SK-N-SH (cell line): ENCODE measurements at regions of chr15 and their contacts with region 1.

Region 1: GRCh38 chr15:43440721-43441281 is 52.2 kb downstream of the TP53BP1 start:
- DNase-seq: peak; percentile 43
- H3K4me3 ChIP-seq: no peak overlapping the region; a peak in 1 of 4 replicates
- H3K27ac ChIP-seq: peak overlapping the region; percentile 36 to 92; a peak in 3 of 4 replicates
- H3K4me1 ChIP-seq: no peaks in the 10 kb centered on the region
- H3K27me3 ChIP-seq: no peaks in the 10 kb centered on the region
- CTCF ChIP-seq: peak; percentile 71
- EP300 ChIP-seq: peak in 1 of 2 experiments; percentile 63; a peak in 1 of 4 replicates
- RAD21 ChIP-seq: peak; percentile 66

Region 2: GRCh38 chr15:43517354-43518196 is 76.8 kb after region 1 on chr15 and contains the start of gene MAP1A:
- CTCF ChIA-PET with region 1: interaction called, 36 read pairs
- POLR2A ChIA-PET with region 1: no interaction called
- DNase-seq: peak; percentile 89
- H3K4me3 ChIP-seq: peak within 1 kb of the TSS; percentile 73 to 85
- H3K27ac ChIP-seq: peak within 1 kb of the TSS; percentile 51 to 85
- H3K4me1 ChIP-seq: peaks cover 19 to 38% of the 10 kb centered on the region in 2 experiments
- H3K27me3 ChIP-seq: no peaks in the 10 kb centered on the region
- CTCF ChIP-seq: peak; percentile 15; the same call in 1 of the 2 replicates
- EP300 ChIP-seq: no peak
- RAD21 ChIP-seq: no peak
- polyA plus RNA-seq, gene MAP1A: 5.3 and 6.0 TPM in 2 replicates